PC-3 (cell line): ENCODE measurements at regions of chr7 and their contacts with region 1.

Region 1: DNA sequence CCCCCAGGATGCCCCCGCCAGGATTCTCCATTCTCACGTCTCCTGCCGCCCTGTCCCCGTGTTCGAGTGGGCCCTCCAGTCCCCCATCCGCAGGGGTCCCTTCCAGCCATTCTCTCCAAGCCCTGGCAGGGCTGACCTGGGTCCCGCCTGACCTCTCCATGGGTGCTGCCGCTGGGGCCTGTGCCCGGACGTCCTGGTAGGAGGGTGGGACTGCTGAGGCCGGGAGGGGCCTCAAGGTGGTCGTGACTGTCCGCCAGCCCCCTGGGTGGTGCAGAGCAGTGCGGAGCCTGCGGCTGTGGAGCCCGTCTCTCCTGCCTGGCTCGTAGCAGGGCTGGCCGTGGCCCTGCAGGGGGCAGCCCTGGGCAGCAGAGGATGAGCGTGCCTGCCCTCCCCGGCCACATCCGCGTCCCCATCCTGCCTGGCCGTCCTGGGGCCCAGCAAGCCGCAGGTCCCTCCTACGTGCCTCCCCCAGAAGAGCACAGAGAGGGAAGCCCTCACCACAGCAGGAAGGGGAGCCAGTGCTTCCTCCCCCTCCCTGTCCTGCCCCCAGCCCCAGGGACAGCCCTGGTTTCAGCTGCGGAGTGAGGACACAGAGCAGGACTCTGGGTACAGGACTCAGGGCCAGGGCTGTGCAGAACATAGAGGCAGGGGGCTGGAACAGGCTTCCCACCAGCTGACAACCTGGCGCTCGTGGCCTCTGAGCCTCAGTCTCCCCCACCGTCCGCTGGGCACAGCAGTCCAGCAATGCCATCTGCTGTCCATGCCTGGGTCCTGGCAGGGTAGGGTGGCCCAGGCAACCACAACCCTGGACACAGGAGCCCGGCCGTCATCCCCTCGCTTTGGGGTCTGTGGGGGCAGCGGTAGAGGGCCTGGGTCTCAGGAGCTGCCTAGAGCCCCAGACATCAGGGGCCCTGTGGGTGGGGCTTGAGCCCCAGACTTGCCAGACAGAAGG is 1.5 kb upstream of the GRIFIN start:
- DNase-seq: peak; percentile 68
- ATAC-seq: peak; percentile 94
- H3K4me3 ChIP-seq: no peak overlapping the region
- H3K27ac ChIP-seq: no peak overlapping the region
- H3K4me1 ChIP-seq: peaks cover 12% of the 10 kb centered on the region; the same call in 1 of the 2 replicates
- H3K27me3 ChIP-seq: no peaks in the 10 kb centered on the region
- CTCF ChIP-seq: peak; percentile 81

Region 2: DNA sequence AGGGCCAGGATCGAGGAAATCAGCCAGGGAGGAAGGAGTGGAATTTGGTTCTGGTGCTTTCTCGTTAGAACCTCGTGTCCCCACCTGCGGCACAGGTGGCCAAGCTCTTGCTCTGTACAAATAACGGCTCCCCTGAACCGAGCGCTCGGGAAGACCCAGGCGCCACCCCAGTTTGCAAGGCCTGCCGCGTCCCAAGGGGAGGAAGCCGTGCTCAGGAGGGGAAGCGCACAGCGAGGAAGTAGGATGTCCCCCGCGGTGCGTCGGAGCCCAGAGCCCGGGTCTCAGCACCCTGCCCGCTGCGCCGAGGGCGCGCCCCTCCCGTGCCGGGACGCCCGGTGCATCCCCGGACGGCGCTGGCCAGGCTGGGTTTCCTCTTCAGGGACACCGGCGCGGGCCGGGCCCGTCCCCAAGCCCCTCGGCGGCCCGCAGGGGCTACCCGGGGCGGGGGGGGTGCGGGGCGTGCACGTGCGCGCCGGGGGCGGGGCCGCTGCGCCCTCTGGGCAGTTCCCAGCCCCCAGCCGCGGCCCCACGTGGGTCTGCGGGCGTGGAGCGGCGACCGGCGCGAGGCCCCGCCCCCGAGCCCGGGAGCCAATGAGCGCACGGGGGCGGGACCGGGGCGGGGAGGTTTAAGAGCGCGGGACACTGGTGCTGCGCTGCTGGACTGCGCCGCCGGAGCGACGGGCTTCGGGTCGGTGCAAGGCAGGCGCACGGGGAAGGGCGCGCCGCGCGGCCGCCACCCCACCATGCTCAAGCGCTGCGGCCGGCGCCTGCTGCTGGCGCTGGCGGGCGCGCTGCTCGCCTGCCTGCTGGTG is 41.6 kb after region 1 on chr7 and contains the start of gene LFNG:
- CTCF ChIA-PET with region 1: no interaction called
- POLR2A ChIA-PET with region 1: no interaction called
- intact Hi-C with region 1: loop called (anchors 5 kb)
- DNase-seq: peak; percentile 88
- ATAC-seq: peak; percentile 75
- H3K4me3 ChIP-seq: peak within 1 kb of the TSS; percentile 68
- H3K27ac ChIP-seq: no peak within 1 kb of the TSS
- H3K4me1 ChIP-seq: peaks cover 48% of the 10 kb centered on the region
- H3K27me3 ChIP-seq: no peaks in the 10 kb centered on the region
- CTCF ChIP-seq: no peak
- total RNA-seq, gene LFNG: 4.8 and 7.7 TPM in 2 replicates

Region 3: GRCh38 chr7:2680792-2681490 is 203.2 kb after region 1 on chr7:
- CTCF ChIA-PET with region 1: no interaction called
- POLR2A ChIA-PET with region 1: no interaction called
- intact Hi-C with region 1: loop called (anchors 5 kb)
- DNase-seq: peak; percentile 79
- ATAC-seq: peak; percentile 88
- H3K4me3 ChIP-seq: no peak overlapping the region
- H3K27ac ChIP-seq: no peak overlapping the region
- H3K4me1 ChIP-seq: no peaks in the 10 kb centered on the region
- H3K27me3 ChIP-seq: no peaks in the 10 kb centered on the region
- CTCF ChIP-seq: peak; percentile 74